ENCODE measurements at regions of chr20 and their contacts with region 1.

Region 1: GRCh38 chr20:23147964-23148730 is 62.0 kb upstream of the CD93 start:
- DNase-seq: peak; percentile 69
- H3K4me3 Mint-ChIP-seq: no peak overlapping the region
- H3K27ac Mint-ChIP-seq: peak overlapping the region; percentile 83
- H3K4me1 Mint-ChIP-seq: peaks cover 12% of the 10 kb centered on the region
- H3K27me3 Mint-ChIP-seq: peaks cover 5% of the 10 kb centered on the region

Region 2: DNA sequence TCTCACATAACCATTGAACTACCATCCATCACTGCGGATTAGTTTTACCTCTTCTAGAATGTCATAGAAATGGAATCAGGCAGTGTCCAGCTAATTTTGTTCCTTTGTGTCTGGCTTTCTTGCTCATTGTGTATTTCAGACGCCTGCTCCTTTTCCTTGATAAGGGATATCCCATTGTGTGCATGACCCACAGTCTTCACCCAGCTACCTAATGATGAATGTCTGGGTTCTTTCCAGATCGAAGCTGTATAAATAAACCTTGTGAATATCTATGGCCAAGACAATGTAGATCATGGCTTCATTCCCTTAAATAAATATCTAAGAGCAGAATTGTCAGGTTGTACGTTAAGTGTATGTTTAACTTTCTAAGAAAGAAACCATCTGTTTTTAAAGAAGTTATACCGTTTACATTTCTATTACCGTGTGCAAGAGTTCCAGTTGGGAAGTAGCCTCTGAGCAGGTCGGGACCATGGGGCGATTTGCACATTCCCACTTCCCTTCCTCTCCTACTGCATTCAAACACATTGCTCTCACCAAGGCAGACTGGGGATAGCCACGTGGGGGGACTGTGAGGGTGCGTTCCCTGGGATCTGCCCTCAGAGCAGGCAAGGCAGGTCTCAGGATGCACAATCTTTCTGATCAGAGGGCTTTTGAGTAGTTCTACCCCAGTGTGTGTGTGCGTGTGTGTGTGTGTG is 75.1 kb before region 1 on chr20:
- CTCF ChIA-PET with region 1: no interaction called
- POLR2A ChIA-PET with region 1: no interaction called
- intact Hi-C with region 1: no loop called
- DNase-seq: no peak
- H3K4me3 Mint-ChIP-seq: no peak overlapping the region
- H3K27ac Mint-ChIP-seq: no peak overlapping the region
- H3K4me1 Mint-ChIP-seq: no peaks in the 10 kb centered on the region
- H3K27me3 Mint-ChIP-seq: no peaks in the 10 kb centered on the region

Region 3: GRCh38 chr20:23086056-23086566 is 62.0 kb before region 1 on chr20 and contains the start of gene CD93:
- CTCF ChIA-PET with region 1: no interaction called
- POLR2A ChIA-PET with region 1: no interaction called
- intact Hi-C with region 1: loop called (anchors 5 kb)
- DNase-seq: peak; percentile 60
- H3K4me3 Mint-ChIP-seq: peak within 1 kb of the TSS; percentile 35
- H3K27ac Mint-ChIP-seq: peak within 1 kb of the TSS; percentile 51
- H3K4me1 Mint-ChIP-seq: peaks cover 11% of the 10 kb centered on the region
- H3K27me3 Mint-ChIP-seq: peaks cover 2% of the 10 kb centered on the region
- total RNA-seq, gene CD93: 1.8 to 1.9 TPM

Region 4: GRCh38 chr20:23187751-23188150 is 39.6 kb after region 1 on chr20:
- CTCF ChIA-PET with region 1: no interaction called
- POLR2A ChIA-PET with region 1: no interaction called
- intact Hi-C with region 1: no loop called
- DNase-seq: no peak
- H3K4me3 Mint-ChIP-seq: no peak overlapping the region
- H3K27ac Mint-ChIP-seq: no peak overlapping the region
- H3K4me1 Mint-ChIP-seq: no peaks in the 10 kb centered on the region
- H3K27me3 Mint-ChIP-seq: peaks cover 3% of the 10 kb centered on the region

Region 5: DNA sequence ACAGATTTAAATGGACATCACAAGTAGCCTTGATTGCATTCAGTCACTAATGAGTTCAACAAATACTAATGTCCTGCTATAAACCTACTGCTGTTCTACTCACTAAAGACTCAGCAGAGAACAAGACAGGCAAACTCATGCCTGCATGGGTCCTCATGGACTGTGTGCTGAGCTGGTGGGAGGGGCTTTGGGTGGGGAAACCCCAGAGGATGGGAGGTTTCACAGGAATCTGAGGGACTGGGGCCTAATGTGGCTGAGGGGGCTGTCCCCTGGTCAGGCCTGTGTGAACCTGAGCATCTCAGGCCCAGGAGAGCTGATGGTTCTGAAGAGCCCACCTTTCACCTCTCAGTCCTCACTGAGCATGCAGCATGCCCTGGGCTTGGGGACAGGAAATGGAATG is 344.1 kb after region 1 on chr20:
- CTCF ChIA-PET with region 1: no interaction called
- POLR2A ChIA-PET with region 1: no interaction called
- intact Hi-C with region 1: loop called (anchors 10 kb)
- DNase-seq: peak; percentile 19
- H3K4me3 Mint-ChIP-seq: no peak overlapping the region
- H3K27ac Mint-ChIP-seq: no peak overlapping the region
- H3K4me1 Mint-ChIP-seq: peaks cover under 1% of the 10 kb centered on the region
- H3K27me3 Mint-ChIP-seq: no peaks in the 10 kb centered on the region

Region 6: GRCh38 chr20:23565503-23566045 is 417.4 kb after region 1 on chr20:
- CTCF ChIA-PET with region 1: no interaction called
- POLR2A ChIA-PET with region 1: no interaction called
- intact Hi-C with region 1: no loop called
- DNase-seq: no peak
- H3K4me3 Mint-ChIP-seq: no peak overlapping the region
- H3K27ac Mint-ChIP-seq: no peak overlapping the region
- H3K4me1 Mint-ChIP-seq: no peaks in the 10 kb centered on the region
- H3K27me3 Mint-ChIP-seq: peaks cover 9% of the 10 kb centered on the region

Measured in activated CD4-positive, alpha-beta memory T cell treated with anti-CD3 and anti-CD28 coated beads for 36 hours (primary cell).